ENCODE measurements at regions of chr16 and their contacts with region 1.

Region 1: GRCh38 chr16:23435500-23435899 is 17.5 kb downstream of the COG7 start:
- DNase-seq: peak; percentile 74
- CTCF ChIP-seq: peak; percentile 89

Region 2: GRCh38 chr16:22912654-22913053 is 522.8 kb before region 1 on chr16:
- in situ Hi-C with region 1: loop called (anchors 25 kb)
- DNase-seq: no peak
- CTCF ChIP-seq: no peak

Region 3: DNA sequence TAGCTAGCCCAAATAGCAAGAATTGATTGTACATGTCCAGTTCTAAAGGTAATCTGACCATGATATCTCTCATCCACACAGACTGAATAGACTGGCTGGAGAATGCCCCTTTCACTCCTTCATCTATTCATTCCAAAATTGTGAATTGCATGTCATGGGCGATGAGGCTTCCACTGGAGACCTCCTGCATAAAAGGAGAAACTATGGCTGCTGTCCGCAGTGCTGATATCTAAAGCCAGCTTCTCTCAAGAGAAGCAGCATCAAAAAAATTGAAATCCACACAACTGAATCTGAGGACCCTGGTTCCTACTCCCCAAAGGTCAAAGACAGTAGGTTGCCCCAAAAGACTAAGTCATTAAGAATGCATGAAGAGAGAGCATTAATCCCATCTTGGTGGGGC is 260.9 kb before region 1 on chr16:
- in situ Hi-C with region 1: loop called (anchors 5 kb)
- DNase-seq: no peak
- CTCF ChIP-seq: no peak